ENCODE measurements at regions of chr3 and their contacts with region 1.

Region 1: DNA sequence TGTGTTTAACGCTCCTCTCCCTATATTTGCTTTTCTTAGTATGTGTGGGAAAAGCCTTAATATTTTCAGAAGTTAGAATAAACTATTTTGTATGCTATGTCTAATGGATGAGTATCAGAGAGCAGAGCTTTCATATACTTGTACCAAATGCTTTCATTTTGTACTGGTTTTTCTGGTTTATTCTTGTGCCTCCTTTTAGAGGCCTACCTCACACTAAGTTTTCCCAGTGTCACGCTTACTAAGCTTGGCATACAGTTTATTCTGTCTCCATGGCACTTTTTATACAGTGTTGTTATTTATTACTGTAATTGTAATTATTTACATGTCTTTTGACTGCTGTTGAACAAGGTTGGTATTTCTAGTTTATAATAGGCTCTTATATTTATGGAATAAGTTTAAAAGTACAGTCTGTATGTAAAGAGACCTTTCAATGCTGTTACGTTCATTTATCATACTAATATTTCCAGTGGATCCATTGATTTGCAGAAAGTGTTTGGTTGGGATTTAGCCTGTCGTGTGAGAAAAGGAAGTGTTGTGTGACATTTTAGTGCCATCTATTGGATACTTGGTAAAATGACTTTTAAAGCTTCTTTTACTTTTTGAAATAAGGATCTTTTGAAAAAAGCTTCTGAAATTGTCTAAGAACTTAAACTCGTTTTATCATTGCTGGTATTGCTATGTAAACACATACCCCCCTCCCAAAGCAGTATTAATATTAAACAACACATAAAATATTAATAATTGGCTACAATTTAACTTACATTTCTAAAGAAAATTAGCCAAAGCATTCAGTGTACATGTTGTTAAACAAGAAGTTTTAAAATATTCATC is 5.2 kb upstream of the EBLN2 start:
- DNase-seq: peak in 2 of 9 experiments; percentile 49 to 57
- ATAC-seq: peak; percentile 29
- H3K4me3 ChIP-seq: no peak overlapping the region
- H3K4me3 Mint-ChIP-seq: no peak overlapping the region
- H3K27ac ChIP-seq: no peak overlapping the region
- H3K27ac Mint-ChIP-seq: peak overlapping the region; percentile 67
- H3K4me1 ChIP-seq: no peaks in the 10 kb centered on the region
- H3K4me1 Mint-ChIP-seq: peaks cover 28% of the 10 kb centered on the region
- H3K27me3 ChIP-seq: no peaks in the 10 kb centered on the region
- H3K27me3 Mint-ChIP-seq: no peaks in the 10 kb centered on the region
- CTCF ChIP-seq: peak; percentile 80

Region 2: DNA sequence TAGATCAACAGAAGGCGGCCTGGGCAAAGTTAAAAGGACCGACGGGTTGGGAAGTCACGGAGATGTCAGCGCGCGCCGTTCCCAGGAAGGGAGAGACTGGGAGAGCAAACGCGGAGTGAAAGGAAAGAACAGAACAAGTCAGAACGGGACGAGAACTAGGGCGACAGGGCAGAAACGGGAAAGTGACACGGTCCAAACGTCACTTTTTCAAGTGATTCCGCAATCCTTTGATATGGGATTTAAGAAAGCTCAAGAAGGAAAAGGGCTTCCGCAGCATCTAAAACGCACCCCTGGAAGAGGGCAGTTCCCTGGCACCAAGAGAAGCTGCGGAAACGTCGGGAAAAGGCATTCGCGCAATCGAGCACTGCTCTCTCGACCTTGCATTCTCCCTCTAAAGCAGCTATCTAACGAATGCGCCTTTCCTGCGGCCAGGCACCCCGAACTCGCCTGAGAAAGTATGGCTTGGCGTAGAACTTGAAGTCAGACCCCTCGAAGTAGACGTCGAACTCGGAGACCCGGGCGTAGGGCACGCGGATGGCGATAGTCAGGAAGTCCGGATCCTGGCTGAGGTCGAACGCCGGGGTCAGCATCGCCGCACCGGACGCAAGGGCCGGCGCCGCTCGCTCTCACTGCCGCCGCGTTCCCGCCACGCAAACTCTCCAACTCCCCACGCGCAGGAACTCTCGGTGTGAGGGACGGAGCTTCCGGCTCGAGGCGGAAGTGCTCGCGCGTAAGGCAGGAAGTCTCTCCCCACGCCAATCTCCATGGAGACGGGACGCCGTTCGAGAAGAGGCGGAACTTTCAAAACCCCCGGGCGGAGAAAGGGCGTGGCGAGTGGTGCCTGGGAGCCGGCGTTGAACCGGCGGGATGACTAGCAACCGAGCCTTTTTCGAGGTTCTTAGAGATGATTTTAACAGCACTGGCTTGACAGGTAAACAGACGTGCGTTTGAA is 208.2 kb before region 1 on chr3 and contains the start of gene SHQ1:
- CTCF ChIA-PET with region 1: interaction called, 15 read pairs
- POLR2A ChIA-PET with region 1: interaction called, 3 read pairs
- intact Hi-C with region 1: loop called (anchors 1 to 2 kb)
- DNase-seq: peak; percentile 84 to 98 (median 95)
- ATAC-seq: peak; percentile 90
- H3K4me3 ChIP-seq: peak within 1 kb of the TSS; percentile 64 to 92
- H3K4me3 Mint-ChIP-seq: peak within 1 kb of the TSS; percentile 95
- H3K27ac ChIP-seq: peak within 1 kb of the TSS; percentile 16 to 51
- H3K27ac Mint-ChIP-seq: peak within 1 kb of the TSS; percentile 80
- H3K4me1 ChIP-seq: peaks cover 23% of the 10 kb centered on the region
- H3K4me1 Mint-ChIP-seq: peaks cover 53% of the 10 kb centered on the region
- H3K27me3 ChIP-seq: no peaks in the 10 kb centered on the region
- H3K27me3 Mint-ChIP-seq: no peaks in the 10 kb centered on the region
- CTCF ChIP-seq: no peak
- total RNA-seq, gene SHQ1: 7.1 to 11.3 TPM

Region 3: DNA sequence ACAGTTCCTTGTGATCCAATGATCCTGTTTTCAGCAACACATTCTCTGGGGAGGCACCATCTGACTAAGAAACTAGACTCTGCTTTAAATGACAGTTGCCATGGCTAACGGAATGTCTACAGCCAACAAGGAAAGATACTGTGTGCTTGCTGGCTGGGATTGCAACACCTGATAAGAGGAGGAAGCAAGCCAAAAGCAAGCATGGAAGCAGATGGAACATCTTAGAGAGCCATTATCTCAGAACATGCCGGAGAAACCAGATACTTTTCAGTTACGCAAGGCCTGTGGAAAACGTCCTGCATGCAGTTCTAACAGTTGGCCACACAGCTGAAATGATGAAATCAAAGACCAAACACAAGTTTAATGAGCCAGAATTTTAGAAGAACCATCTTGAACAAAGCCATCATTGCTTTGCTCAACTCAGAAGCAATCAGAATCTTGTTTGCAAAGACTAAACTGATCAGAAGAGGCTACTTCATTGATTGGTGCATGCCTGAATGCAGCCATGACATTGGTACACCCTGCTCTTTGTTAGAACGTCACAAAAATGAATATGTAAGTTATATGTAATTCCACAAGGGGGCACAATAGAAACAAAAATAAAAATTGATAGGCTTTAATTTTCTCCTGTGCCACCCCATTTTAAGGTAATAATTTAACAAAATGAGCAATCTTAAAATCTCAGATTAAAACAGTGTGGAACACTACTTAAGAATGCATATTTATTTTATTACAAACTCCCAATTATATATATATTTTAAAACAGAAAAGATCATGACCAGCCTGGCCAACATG is 117.6 kb before region 1 on chr3:
- CTCF ChIA-PET with region 1: interaction called, 108 read pairs
- POLR2A ChIA-PET with region 1: interaction called, 3 read pairs
- intact Hi-C with region 1: loop called (anchors 1 kb)
- DNase-seq: peak in 5 of 9 experiments; percentile 4 to 70 (median 40)
- ATAC-seq: peak; percentile 100
- H3K4me3 ChIP-seq: no peak overlapping the region
- H3K4me3 Mint-ChIP-seq: no peak overlapping the region
- H3K27ac ChIP-seq: no peak overlapping the region
- H3K27ac Mint-ChIP-seq: no peak overlapping the region
- H3K4me1 ChIP-seq: no peaks in the 10 kb centered on the region
- H3K4me1 Mint-ChIP-seq: no peaks in the 10 kb centered on the region
- H3K27me3 ChIP-seq: no peaks in the 10 kb centered on the region
- H3K27me3 Mint-ChIP-seq: no peaks in the 10 kb centered on the region
- CTCF ChIP-seq: peak; percentile 64

Region 4: GRCh38 chr3:72951259-72951722 is 104.9 kb before region 1 on chr3:
- CTCF ChIA-PET with region 1: interaction called, 11 read pairs
- POLR2A ChIA-PET with region 1: no interaction called
- intact Hi-C with region 1: no loop called
- DNase-seq: peak in 2 of 9 experiments; percentile 7 to 26
- ATAC-seq: peak; percentile 31
- H3K4me3 ChIP-seq: no peak overlapping the region
- H3K4me3 Mint-ChIP-seq: no peak overlapping the region
- H3K27ac ChIP-seq: no peak overlapping the region
- H3K27ac Mint-ChIP-seq: no peak overlapping the region
- H3K4me1 ChIP-seq: no peaks in the 10 kb centered on the region
- H3K4me1 Mint-ChIP-seq: peaks cover 9% of the 10 kb centered on the region
- H3K27me3 ChIP-seq: no peaks in the 10 kb centered on the region
- H3K27me3 Mint-ChIP-seq: no peaks in the 10 kb centered on the region
- CTCF ChIP-seq: no peak

Region 5: GRCh38 chr3:72996473-72997333 is 59.5 kb before region 1 on chr3 and contains the start of gene PPP4R2:
- CTCF ChIA-PET with region 1: interaction called, 6 read pairs
- POLR2A ChIA-PET with region 1: no interaction called
- intact Hi-C with region 1: loop called (anchors 1 to 2 kb)
- DNase-seq: peak; percentile 83 to 97 (median 91)
- ATAC-seq: peak; percentile 87
- H3K4me3 ChIP-seq: peak within 1 kb of the TSS; percentile 82 to 96
- H3K4me3 Mint-ChIP-seq: peak within 1 kb of the TSS; percentile 86
- H3K27ac ChIP-seq: peak within 1 kb of the TSS; percentile 89 to 92
- H3K27ac Mint-ChIP-seq: peak within 1 kb of the TSS; percentile 90
- H3K4me1 ChIP-seq: peaks cover 44% of the 10 kb centered on the region
- H3K4me1 Mint-ChIP-seq: peaks cover 46% of the 10 kb centered on the region
- H3K27me3 ChIP-seq: no peaks in the 10 kb centered on the region
- H3K27me3 Mint-ChIP-seq: no peaks in the 10 kb centered on the region
- CTCF ChIP-seq: no peak
- total RNA-seq, gene PPP4R2: 77.7 to 80.4 TPM

Region 6: DNA sequence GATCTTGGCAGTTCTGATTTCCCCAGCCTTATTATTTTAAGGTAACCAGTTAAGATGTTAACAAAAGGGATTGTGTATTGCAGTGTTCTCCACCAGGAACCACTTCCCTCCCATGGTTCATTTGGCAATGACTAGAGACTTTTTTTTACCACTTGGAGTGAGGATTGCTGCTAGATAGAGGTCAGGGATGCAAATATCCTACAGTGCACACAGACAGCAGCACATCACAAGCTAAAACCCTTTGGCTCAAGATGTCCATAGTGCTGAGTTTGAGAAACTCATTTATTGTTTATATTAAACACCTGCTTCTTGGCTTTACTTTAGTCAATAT is 18.9 kb before region 1 on chr3:
- CTCF ChIA-PET with region 1: interaction called, 4 read pairs
- POLR2A ChIA-PET with region 1: no interaction called
- intact Hi-C with region 1: loop called in 1 of 2 experiments (anchors 1 kb)
- DNase-seq: no peak
- ATAC-seq: no peak
- H3K4me3 ChIP-seq: no peak overlapping the region
- H3K4me3 Mint-ChIP-seq: no peak overlapping the region
- H3K27ac ChIP-seq: no peak overlapping the region
- H3K27ac Mint-ChIP-seq: peak overlapping the region; percentile 94
- H3K4me1 ChIP-seq: peaks cover 19% of the 10 kb centered on the region
- H3K4me1 Mint-ChIP-seq: peaks cover 85% of the 10 kb centered on the region
- H3K27me3 ChIP-seq: no peaks in the 10 kb centered on the region
- H3K27me3 Mint-ChIP-seq: no peaks in the 10 kb centered on the region
- CTCF ChIP-seq: no peak

Region 7: DNA sequence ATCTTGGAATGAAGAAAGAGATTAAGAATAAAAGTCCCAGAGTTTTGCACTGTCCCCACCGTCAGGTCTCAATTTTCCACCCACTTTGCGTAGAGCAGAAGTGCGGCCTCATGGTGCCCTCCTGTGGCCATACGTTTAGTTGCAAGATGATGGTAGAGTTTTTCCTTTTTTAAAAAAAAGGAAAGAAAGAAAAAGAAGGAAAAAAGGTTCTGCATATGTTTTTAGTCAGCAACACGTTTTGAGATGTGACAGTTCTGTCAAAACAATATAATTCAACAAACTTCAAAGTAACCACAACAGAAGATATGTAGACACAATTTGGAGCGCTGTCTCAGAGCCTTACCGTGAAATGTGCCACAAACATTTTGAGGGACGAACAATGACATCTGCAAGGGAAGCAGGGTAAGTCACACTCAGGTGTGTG is 29.9 kb after region 1 on chr3:
- CTCF ChIA-PET with region 1: interaction called, 7 read pairs
- POLR2A ChIA-PET with region 1: no interaction called
- intact Hi-C with region 1: loop called in 1 of 2 experiments (anchors 2 kb)
- DNase-seq: peak in 8 of 9 experiments; percentile 15 to 68 (median 56)
- ATAC-seq: peak; percentile 73
- H3K4me3 ChIP-seq: no peak overlapping the region
- H3K4me3 Mint-ChIP-seq: peak overlapping the region; percentile 27
- H3K27ac ChIP-seq: no peak overlapping the region
- H3K27ac Mint-ChIP-seq: peak overlapping the region; percentile 23
- H3K4me1 ChIP-seq: no peaks in the 10 kb centered on the region
- H3K4me1 Mint-ChIP-seq: peaks cover 7% of the 10 kb centered on the region
- H3K27me3 ChIP-seq: no peaks in the 10 kb centered on the region
- H3K27me3 Mint-ChIP-seq: no peaks in the 10 kb centered on the region
- CTCF ChIP-seq: peak; percentile 92

Region 8: DNA sequence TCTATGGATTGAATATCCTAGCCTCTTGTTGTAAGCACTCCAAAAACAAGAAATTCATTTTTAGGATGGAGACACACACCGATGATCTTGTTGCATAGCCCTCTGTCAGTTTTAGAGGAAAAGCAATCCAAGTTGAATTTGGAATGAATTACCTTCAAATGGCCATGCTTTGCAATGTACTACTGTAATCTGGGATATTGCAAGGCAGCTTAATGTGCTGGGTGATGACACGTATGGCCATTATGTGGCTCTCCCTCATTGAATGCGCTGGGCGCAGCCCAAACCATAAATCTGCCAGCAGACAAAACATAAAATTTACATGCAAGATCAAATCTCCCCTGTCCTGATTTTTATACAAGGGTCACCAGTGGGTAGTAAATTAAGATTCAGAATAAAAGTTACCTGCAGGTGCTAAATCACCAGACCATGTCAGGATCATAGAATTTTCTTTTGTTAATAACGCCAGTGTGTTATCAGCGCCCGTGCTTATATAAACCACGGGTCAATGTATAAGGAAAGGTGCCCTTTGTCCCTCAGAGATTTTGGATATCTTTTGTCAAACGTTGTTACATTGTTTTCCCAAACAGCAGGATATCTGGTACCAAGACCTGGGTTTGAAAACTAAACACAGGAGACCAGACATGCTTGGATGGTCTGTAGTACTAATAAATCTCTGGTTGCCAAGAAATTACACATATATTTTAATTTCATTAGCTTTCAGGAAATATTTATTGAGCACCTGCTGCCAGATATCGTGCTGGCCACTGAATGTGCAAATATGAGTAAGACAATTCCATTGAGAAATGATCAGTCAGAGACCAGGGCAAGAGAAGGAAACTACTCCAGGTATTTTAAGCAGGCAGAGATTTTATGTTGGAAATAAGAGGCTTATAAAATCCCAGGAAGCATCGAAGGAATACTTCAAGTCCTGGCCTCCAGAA is 242.3 kb after region 1 on chr3:
- CTCF ChIA-PET with region 1: no interaction called
- POLR2A ChIA-PET with region 1: no interaction called
- intact Hi-C with region 1: no loop called
- DNase-seq: no peak
- ATAC-seq: no peak
- H3K4me3 ChIP-seq: no peak overlapping the region
- H3K4me3 Mint-ChIP-seq: no peak overlapping the region
- H3K27ac ChIP-seq: no peak overlapping the region
- H3K27ac Mint-ChIP-seq: no peak overlapping the region
- H3K4me1 ChIP-seq: no peaks in the 10 kb centered on the region
- H3K4me1 Mint-ChIP-seq: no peaks in the 10 kb centered on the region
- H3K27me3 ChIP-seq: no peaks in the 10 kb centered on the region
- H3K27me3 Mint-ChIP-seq: peaks cover 2% of the 10 kb centered on the region
- CTCF ChIP-seq: no peak